BJ (cell line): ENCODE measurements at regions of chr15 and their contacts with region 1.

Region 1: DNA sequence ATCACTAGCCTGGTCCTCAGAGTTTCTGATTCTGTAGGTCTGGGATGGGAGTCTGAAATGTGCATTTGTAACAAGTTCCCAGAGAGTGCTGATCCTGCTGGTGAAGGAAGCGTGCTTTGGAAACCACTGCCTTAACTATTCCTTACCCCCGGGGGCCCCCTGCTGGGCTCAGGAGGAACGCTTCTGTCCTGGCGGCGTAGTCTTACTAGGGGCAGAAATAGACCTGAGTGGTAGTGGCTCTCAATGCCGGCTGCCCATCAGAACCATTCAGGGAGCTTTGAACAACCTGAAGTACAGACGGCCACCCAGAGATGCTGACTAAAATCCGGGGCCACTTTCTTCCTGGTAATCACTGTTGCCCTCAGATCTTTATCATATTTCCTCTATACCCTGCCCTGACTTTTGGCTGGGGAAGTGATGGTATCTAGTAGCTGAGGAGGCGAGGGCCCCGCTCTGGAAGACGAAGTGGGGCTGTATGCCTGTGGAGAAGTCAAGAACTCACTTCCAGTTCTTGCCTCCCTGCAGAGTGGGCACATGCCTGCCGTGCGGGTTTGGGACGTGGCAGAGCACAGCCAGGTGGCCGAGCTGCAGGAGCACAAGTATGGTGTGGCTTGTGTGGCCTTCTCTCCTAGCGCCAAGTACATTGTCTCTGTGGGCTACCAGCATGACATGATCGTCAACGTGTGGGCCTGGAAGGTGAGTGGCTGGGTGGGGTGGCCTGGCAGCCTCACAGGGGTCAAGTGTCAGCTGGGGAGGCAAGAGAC is 16.3 kb upstream of the JMJD7 start:
- DNase-seq: no peak
- H3K4me3 ChIP-seq: no peak overlapping the region
- H3K27me3 ChIP-seq: no peaks in the 10 kb centered on the region
- CTCF ChIP-seq: peak; percentile 95

Region 2: DNA sequence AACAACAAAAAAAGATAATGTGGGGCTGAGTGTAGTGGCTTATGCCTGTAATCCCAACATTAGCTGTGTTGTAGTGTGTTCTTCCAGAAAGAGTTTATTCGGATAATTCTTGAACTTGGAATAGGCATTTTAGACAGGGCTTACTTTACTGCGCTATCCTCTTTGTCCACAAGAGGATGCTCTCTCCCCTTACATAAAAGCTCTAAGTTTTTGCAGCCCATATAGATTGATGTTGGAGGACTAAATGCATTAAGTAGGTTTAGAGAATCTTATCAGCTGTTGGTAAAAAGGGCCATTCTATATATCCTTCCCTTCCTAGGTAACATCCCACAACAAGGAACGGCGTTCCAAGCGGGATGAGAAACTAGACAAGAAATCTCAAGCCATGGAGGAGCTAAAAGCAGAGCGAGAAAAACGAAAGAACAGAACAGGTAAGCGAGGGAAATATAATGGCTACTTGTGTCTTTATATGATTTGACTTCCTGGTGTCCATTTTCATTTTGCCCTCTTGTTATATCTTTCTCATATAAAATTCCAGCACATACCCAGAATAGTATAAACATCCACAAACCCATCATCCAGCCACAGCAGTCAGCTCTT is 345.7 kb before region 1 on chr15:
- CTCF ChIA-PET with region 1: interaction called, 19 read pairs
- POLR2A ChIA-PET with region 1: no interaction called
- DNase-seq: no peak
- H3K4me3 ChIP-seq: no peak overlapping the region
- H3K27me3 ChIP-seq: no peaks in the 10 kb centered on the region
- CTCF ChIP-seq: peak; percentile 96

Region 3: GRCh38 chr15:41790756-41791546 is 20.7 kb before region 1 on chr15:
- CTCF ChIA-PET with region 1: interaction called, 27 read pairs
- POLR2A ChIA-PET with region 1: no interaction called
- DNase-seq: peak; percentile 57
- H3K4me3 ChIP-seq: no peak overlapping the region
- H3K27me3 ChIP-seq: no peaks in the 10 kb centered on the region
- CTCF ChIP-seq: no peak

Region 4: DNA sequence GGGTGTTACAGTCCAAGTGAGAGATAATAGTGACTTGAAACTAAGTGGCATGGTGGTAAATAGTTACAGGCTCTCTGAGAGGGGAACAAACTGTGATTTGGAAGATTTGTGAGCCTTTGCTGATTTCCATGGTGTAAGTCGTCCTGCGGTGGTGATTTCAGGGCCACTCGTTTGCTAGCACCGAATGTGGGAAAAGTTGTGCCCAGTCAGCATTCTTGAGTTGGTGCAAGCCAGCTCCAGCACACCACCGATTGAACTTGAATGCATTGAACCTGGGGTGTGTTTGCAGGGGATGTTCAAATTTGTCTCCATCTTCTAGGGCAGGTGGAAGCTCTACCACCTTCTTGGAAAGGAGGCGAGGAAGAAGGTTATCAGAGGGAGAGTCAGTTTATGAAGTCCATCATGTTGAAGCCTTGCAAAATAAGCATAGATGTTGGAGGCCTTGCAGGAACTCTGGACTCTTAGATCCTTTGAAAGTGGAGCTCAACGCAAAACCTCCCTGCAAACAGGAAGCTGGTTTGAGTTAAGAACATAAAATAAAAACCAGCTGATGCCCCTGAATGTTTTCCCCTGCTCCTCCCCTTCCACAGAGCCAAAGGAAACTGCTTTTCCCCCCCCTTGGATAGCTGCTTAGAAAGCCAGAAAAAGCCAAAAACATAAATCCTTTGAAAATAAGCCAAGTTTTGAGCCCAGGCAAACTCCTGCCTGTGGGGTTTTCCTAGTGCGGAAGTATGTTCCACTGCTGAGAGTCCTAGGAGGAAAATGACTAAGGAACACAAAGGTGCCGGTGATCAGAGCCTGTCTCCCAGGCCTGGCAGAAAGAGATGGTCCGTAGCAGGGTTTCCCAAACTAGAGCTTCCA is 15.4 kb before region 1 on chr15:
- CTCF ChIA-PET with region 1: interaction called, 27 read pairs
- POLR2A ChIA-PET with region 1: no interaction called
- DNase-seq: peak; percentile 81
- H3K4me3 ChIP-seq: no peak overlapping the region
- H3K27me3 ChIP-seq: no peaks in the 10 kb centered on the region
- CTCF ChIP-seq: no peak

Region 5: GRCh38 chr15:41832875-41833274 is 21.3 kb after region 1 on chr15:
- CTCF ChIA-PET with region 1: no interaction called
- POLR2A ChIA-PET with region 1: no interaction called
- DNase-seq: no peak
- H3K4me3 ChIP-seq: no peak overlapping the region
- H3K27me3 ChIP-seq: no peaks in the 10 kb centered on the region
- CTCF ChIP-seq: no peak

Region 6: GRCh38 chr15:41980654-41981323 is 169.2 kb after region 1 on chr15:
- CTCF ChIA-PET with region 1: no interaction called
- POLR2A ChIA-PET with region 1: no interaction called
- DNase-seq: no peak
- H3K4me3 ChIP-seq: no peak overlapping the region
- H3K27me3 ChIP-seq: no peaks in the 10 kb centered on the region
- CTCF ChIP-seq: no peak